ENCODE measurements at regions of chr1 and their contacts with region 1.

Region 1: DNA sequence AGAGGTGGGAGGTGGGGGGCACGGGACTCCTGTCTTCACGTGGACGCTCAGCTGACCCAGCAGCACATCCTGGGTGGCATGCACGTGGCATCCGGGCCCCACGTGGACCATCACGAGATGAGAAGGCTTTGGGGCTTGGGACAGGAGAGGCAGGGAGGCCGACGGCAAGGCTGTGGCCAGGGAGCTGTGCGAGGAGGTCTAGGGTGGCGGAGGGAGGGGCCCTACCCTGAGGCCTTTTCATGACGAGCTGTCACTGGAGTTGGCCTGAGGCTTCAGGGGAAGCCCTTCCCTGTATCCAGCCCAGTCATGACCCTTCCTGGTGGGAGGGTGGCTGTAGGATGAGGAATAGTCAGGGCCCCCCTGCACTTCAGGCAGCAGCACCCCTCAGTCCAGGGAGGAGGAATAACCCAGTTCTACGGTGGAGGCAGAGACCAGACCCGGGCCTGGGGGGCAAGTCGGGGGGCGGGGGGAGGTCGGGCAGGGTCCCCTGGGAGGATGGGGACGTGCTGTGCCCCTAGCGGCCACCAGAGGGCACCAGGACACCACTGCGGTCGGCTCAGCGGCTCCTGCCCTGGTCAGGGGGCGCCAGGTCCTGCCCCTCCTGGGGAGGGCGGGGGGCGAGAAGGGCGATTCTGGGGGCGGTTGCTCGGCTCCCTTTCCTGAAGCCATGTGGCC is 2.0 kb upstream of the PERM1 start:
- DNase-seq: peak; percentile 51 to 85 (median 82)
- ATAC-seq: peak; percentile 17 to 18
- H3K4me3 ChIP-seq: no peak overlapping the region
- H3K27ac ChIP-seq: no peak overlapping the region
- H3K4me1 ChIP-seq: no peaks in the 10 kb centered on the region
- H3K27me3 ChIP-seq: no peaks in the 10 kb centered on the region

Region 2: DNA sequence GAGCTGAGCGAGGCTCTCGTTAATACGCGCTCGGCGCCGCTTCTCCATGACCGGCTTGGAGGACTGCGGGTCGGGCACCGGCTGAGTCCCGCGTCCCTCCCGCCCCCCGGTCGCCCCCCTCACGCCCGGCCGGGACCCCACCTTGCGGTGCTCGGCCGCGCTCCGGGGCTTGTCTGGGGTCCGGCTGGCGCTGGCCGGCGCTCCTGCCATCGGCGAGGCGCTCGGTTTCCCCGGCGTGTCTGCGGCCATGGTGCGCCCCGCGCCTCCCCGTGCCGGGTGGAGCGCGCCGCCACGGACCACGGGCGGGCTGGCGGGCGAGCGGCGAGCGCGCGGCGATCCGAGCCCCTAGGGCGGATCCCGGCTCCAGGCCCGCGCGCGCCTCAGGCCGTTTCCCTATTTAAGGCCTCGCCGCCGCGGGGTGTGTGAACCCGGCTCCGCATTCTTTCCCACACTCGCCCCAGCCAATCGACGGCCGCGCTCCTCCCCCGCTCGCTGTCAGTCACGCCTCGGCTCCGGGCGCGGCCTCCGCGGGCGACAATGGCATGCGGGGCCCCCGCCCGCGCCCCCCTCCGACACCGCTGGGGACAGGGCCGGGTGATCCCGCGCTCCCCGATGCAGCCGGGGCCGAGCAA is 15.9 kb after region 1 on chr1 and contains the start of gene HES4:
- intact Hi-C with region 1: loop called in 1 of 4 experiments (anchors 2 kb)
- DNase-seq: peak; percentile 96 to 98 (median 97)
- ATAC-seq: peak; percentile 81 to 86
- H3K4me3 ChIP-seq: peak within 1 kb of the TSS; percentile 60
- H3K27ac ChIP-seq: peak within 1 kb of the TSS; percentile 88
- H3K4me1 ChIP-seq: peaks cover 4% of the 10 kb centered on the region
- H3K27me3 ChIP-seq: no peaks in the 10 kb centered on the region
- total RNA-seq, gene HES4: 37.3 to 62.5 (median 38.6) TPM

Region 3: GRCh38 chr1:1059494-1060280 is 75.8 kb after region 1 on chr1:
- intact Hi-C with region 1: loop called (anchors 5 kb)
- DNase-seq: peak; percentile 89 to 96 (median 96)
- ATAC-seq: peak; percentile 87
- H3K4me3 ChIP-seq: peak overlapping the region; percentile 65
- H3K27ac ChIP-seq: no peak overlapping the region
- H3K4me1 ChIP-seq: no peaks in the 10 kb centered on the region
- H3K27me3 ChIP-seq: no peaks in the 10 kb centered on the region

Measured in right cardiac atrium (tissue), 5 donors.